ENCODE measurements at regions of chr5 and their contacts with region 1.

Region 1: GRCh38 chr5:141691867-141692532 is 10.0 kb upstream of the ARAP3 start:
- DNase-seq: peak; percentile 83
- ATAC-seq: peak; percentile 98
- H3K4me3 Mint-ChIP-seq: peak overlapping the region; percentile 47
- H3K27ac Mint-ChIP-seq: no peak overlapping the region
- H3K4me1 Mint-ChIP-seq: peaks cover 11% of the 10 kb centered on the region
- H3K27me3 Mint-ChIP-seq: peaks cover 52% of the 10 kb centered on the region
- CTCF ChIP-seq: peak; percentile 81

Region 2: GRCh38 chr5:141681695-141682641 is 10.0 kb before region 1 on chr5 and contains the start of gene ARAP3:
- CTCF ChIA-PET with region 1: interaction called, 16 read pairs
- POLR2A ChIA-PET with region 1: no interaction called
- intact Hi-C with region 1: no loop called
- DNase-seq: peak; percentile 50
- ATAC-seq: peak; percentile 81
- H3K4me3 Mint-ChIP-seq: peak within 1 kb of the TSS; percentile 79
- H3K27ac Mint-ChIP-seq: no peak within 1 kb of the TSS
- H3K4me1 Mint-ChIP-seq: peaks cover 23% of the 10 kb centered on the region
- H3K27me3 Mint-ChIP-seq: peaks cover 3% of the 10 kb centered on the region
- CTCF ChIP-seq: no peak
- total RNA-seq, gene ARAP3: 0.44 and 0.49 TPM in 2 replicates

Region 3: GRCh38 chr5:141811287-141812155 is 119.5 kb after region 1 on chr5:
- CTCF ChIA-PET with region 1: interaction called, 9 read pairs
- POLR2A ChIA-PET with region 1: no interaction called
- intact Hi-C with region 1: loop called (anchors 1 kb)
- DNase-seq: no peak
- ATAC-seq: peak; percentile 45
- H3K4me3 Mint-ChIP-seq: no peak overlapping the region
- H3K27ac Mint-ChIP-seq: no peak overlapping the region
- H3K4me1 Mint-ChIP-seq: no peaks in the 10 kb centered on the region
- H3K27me3 Mint-ChIP-seq: peaks cover 57% of the 10 kb centered on the region
- CTCF ChIP-seq: no peak

Region 4: GRCh38 chr5:141825791-141826560 is 134.0 kb after region 1 on chr5:
- CTCF ChIA-PET with region 1: interaction called, 7 read pairs
- POLR2A ChIA-PET with region 1: no interaction called
- intact Hi-C with region 1: loop called (anchors 1 kb)
- DNase-seq: no peak
- ATAC-seq: no peak
- H3K4me3 Mint-ChIP-seq: no peak overlapping the region
- H3K27ac Mint-ChIP-seq: no peak overlapping the region
- H3K4me1 Mint-ChIP-seq: no peaks in the 10 kb centered on the region
- H3K27me3 Mint-ChIP-seq: peaks cover 10% of the 10 kb centered on the region
- CTCF ChIP-seq: no peak

Region 5: DNA sequence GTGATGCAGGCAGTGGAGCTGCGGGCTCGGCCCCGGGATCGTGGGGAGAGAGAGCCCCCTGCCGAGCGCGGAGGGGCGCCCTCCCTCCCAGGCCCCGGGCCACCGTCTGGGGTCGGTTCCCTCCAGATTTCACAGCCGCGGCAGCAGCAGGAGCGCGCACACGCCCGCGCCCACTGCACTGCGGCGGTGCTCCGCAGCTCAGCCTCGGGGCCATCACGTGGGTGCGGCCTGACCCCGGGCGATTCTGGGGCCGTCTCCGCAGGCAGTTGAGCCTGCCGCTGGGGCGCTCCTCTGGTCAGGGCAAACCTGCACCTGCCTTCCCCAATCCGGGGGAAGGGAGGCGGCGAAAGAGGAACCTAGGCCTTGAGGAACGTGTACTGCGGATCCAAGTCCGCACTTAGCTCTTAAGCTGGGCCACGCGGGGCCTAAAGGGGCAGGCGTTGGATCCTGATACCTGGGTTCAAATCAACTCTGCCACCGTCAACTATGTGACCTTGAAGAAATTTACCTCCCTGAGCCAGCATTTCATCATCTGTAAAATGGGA is 222.3 kb after region 1 on chr5:
- CTCF ChIA-PET with region 1: interaction called, 10 read pairs
- POLR2A ChIA-PET with region 1: no interaction called
- intact Hi-C with region 1: no loop called
- DNase-seq: peak; percentile 47
- ATAC-seq: peak; percentile 78
- H3K4me3 Mint-ChIP-seq: peak overlapping the region; percentile 72
- H3K27ac Mint-ChIP-seq: no peak overlapping the region
- H3K4me1 Mint-ChIP-seq: peaks cover 40% of the 10 kb centered on the region
- H3K27me3 Mint-ChIP-seq: peaks cover 8% of the 10 kb centered on the region
- CTCF ChIP-seq: no peak

Region 6: GRCh38 chr5:142145106-142145900 is 453.3 kb after region 1 on chr5:
- CTCF ChIA-PET with region 1: interaction called, 18 read pairs
- POLR2A ChIA-PET with region 1: no interaction called
- intact Hi-C with region 1: loop called (anchors 1 kb)
- DNase-seq: no peak
- ATAC-seq: peak; percentile 86
- H3K4me3 Mint-ChIP-seq: no peak overlapping the region
- H3K27ac Mint-ChIP-seq: no peak overlapping the region
- H3K4me1 Mint-ChIP-seq: no peaks in the 10 kb centered on the region
- H3K27me3 Mint-ChIP-seq: no peaks in the 10 kb centered on the region
- CTCF ChIP-seq: peak; percentile 78

Region 7: DNA sequence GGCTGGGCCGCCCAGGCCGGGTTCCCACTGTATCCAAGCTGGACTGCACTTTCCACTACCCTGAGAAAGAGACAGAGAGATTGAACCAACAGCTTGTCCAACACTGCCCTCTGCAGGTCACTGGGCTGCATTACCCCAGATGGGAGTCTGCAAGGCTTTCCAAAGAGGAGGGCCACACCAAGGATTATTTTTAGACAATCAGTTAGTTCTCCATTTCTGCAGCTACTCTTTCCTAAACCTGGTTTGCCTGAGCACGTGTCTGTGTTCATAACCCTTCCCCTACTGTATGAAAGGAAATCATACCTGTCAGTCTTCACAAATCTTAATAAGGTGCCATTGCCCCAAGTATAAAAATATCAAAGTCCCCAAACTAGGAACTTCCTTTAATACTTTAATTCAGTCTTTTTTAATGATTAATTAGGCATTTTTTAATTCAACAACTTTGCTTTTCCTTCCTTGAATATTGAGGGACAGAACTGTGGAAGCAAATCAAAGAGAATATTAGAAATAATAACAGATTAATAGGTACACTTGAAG is 1007.3 kb after region 1 on chr5:
- CTCF ChIA-PET with region 1: no interaction called
- POLR2A ChIA-PET with region 1: no interaction called
- intact Hi-C with region 1: loop called (anchors 5 kb)
- DNase-seq: peak; percentile 33
- ATAC-seq: peak; percentile 73
- H3K4me3 Mint-ChIP-seq: no peak overlapping the region
- H3K27ac Mint-ChIP-seq: no peak overlapping the region
- H3K4me1 Mint-ChIP-seq: no peaks in the 10 kb centered on the region
- H3K27me3 Mint-ChIP-seq: peaks cover 17% of the 10 kb centered on the region
- CTCF ChIP-seq: peak; percentile 25

Measured in activated B cell treated with CpG ODN at 0.5 μM for 24 hours (primary cell).